WTC11 (cell line): ENCODE measurements at regions of chr7 and their contacts with region 1.

Region 1: GRCh38 chr7:10939911-10940703 is 33.6 kb upstream of the PHF14 start:
- DNase-seq: peak; percentile 76
- ATAC-seq: peak; percentile 87
- H3K4me3 Mint-ChIP-seq: no peak overlapping the region
- H3K27ac Mint-ChIP-seq: no peak overlapping the region
- H3K4me1 Mint-ChIP-seq: peaks cover 25% of the 10 kb centered on the region
- H3K27me3 Mint-ChIP-seq: no peaks in the 10 kb centered on the region
- CTCF ChIP-seq: no peak

Region 2: GRCh38 chr7:10908600-10908999 is 31.5 kb before region 1 on chr7:
- CTCF ChIA-PET with region 1: no interaction called
- POLR2A ChIA-PET with region 1: interaction called, 10 read pairs
- DNase-seq: peak; percentile 87
- ATAC-seq: peak; percentile 95
- H3K4me3 Mint-ChIP-seq: peak overlapping the region; percentile 45; the same call in 1 of the 2 replicates
- H3K27ac Mint-ChIP-seq: peak overlapping the region; percentile 95
- H3K4me1 Mint-ChIP-seq: peaks cover 25% of the 10 kb centered on the region
- H3K27me3 Mint-ChIP-seq: no peaks in the 10 kb centered on the region; the same call in 1 of the 2 replicates
- CTCF ChIP-seq: no peak

Region 3: GRCh38 chr7:10973061-10973944 is 33.2 kb after region 1 on chr7 and contains the start of gene PHF14:
- CTCF ChIA-PET with region 1: no interaction called
- POLR2A ChIA-PET with region 1: interaction called, 21 read pairs
- DNase-seq: peak; percentile 97
- ATAC-seq: peak; percentile 98
- H3K4me3 Mint-ChIP-seq: peak within 1 kb of the TSS; percentile 89
- H3K27ac Mint-ChIP-seq: peak within 1 kb of the TSS; percentile 100
- H3K4me1 Mint-ChIP-seq: peaks cover 39% of the 10 kb centered on the region
- H3K27me3 Mint-ChIP-seq: no peaks in the 10 kb centered on the region; the same call in 1 of the 2 replicates
- CTCF ChIP-seq: no peak
- total RNA-seq, gene PHF14: 47.7 to 49.9 TPM (median 48.6 TPM) in 3 replicates